Activated B cell treated with CpG ODN at 0.5 μM for 24 hours (primary cell): ENCODE measurements at regions of chr2 and their contacts with region 1.

Region 1: DNA sequence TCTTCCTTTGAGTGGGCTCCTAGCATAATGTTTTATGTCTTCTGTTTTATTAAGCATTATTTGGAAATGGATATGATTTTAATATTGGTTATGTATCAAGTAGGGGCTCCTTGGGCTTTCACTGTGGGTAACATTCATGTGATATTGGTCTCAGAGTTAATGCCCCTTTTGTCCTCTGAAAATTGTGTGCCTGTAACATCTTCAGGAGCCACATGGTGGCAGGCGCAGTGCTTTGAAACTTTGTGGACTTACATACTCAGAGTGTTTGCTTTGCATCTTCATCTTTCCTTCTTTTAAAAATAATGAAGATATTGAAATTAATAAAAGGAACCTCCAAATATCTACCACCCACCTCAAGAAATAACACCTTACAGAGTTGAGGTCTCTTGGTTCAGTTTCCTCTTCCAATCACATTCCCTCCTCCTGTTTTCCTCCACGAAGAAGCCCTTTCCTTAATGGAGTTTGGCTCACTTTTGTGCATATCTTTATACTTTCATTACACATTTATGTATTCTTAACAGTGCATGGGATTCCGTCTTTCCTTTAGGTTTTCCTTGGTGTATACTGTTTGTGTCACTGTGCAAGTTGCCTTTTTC is 73.5 kb downstream of the LIMS1 start:
- DNase-seq: no peak
- ATAC-seq: no peak
- H3K4me3 Mint-ChIP-seq: no peak overlapping the region
- H3K27ac Mint-ChIP-seq: no peak overlapping the region
- H3K4me1 Mint-ChIP-seq: peaks cover 46% of the 10 kb centered on the region
- H3K27me3 Mint-ChIP-seq: no peaks in the 10 kb centered on the region
- CTCF ChIP-seq: no peak

Region 2: GRCh38 chr2:108621087-108621559 is 13.3 kb after region 1 on chr2:
- CTCF ChIA-PET with region 1: interaction called, 5 read pairs
- POLR2A ChIA-PET with region 1: interaction called, 26 read pairs
- intact Hi-C with region 1: loop called (anchors 1 kb)
- DNase-seq: no peak
- ATAC-seq: peak; percentile 98
- H3K4me3 Mint-ChIP-seq: peak overlapping the region; percentile 69
- H3K27ac Mint-ChIP-seq: peak overlapping the region; percentile 82
- H3K4me1 Mint-ChIP-seq: peaks cover 54% of the 10 kb centered on the region
- H3K27me3 Mint-ChIP-seq: no peaks in the 10 kb centered on the region
- CTCF ChIP-seq: no peak

Region 3: GRCh38 chr2:108637304-108637669 is 29.5 kb after region 1 on chr2:
- CTCF ChIA-PET with region 1: interaction called, 64 read pairs
- POLR2A ChIA-PET with region 1: interaction called, 7 read pairs
- intact Hi-C with region 1: loop called (anchors 1 kb)
- DNase-seq: no peak
- ATAC-seq: no peak
- H3K4me3 Mint-ChIP-seq: no peak overlapping the region
- H3K27ac Mint-ChIP-seq: no peak overlapping the region
- H3K4me1 Mint-ChIP-seq: peaks cover 31% of the 10 kb centered on the region
- H3K27me3 Mint-ChIP-seq: no peaks in the 10 kb centered on the region
- CTCF ChIP-seq: no peak

Region 4: DNA sequence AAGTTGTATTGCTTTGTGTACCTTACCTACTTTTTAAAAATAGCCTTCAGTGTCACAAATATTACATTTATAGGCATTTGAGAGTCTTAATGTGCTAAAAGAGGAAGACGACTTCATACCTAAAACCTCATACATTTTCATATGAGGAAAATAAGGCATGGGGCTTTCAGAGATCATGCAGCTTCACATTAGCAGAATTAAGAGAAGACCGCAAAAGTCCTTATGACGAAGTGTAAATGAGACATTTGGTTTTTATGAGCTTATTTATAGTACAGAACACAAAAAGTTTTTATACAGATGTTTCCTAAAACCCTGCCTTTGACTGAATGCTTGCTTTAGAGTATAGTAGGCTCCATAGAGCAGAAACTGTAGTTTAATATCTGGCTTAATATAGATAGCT is 168.7 kb after region 1 on chr2:
- CTCF ChIA-PET with region 1: no interaction called
- POLR2A ChIA-PET with region 1: no interaction called
- intact Hi-C with region 1: loop called (anchors 5 kb)
- DNase-seq: no peak
- ATAC-seq: peak; percentile 85
- H3K4me3 Mint-ChIP-seq: peak overlapping the region; percentile 65
- H3K27ac Mint-ChIP-seq: peak overlapping the region; percentile 85
- H3K4me1 Mint-ChIP-seq: peaks cover 47% of the 10 kb centered on the region
- H3K27me3 Mint-ChIP-seq: no peaks in the 10 kb centered on the region
- CTCF ChIP-seq: no peak